ENCODE measurements at regions of chr11 and their contacts with region 1.

Region 1: DNA sequence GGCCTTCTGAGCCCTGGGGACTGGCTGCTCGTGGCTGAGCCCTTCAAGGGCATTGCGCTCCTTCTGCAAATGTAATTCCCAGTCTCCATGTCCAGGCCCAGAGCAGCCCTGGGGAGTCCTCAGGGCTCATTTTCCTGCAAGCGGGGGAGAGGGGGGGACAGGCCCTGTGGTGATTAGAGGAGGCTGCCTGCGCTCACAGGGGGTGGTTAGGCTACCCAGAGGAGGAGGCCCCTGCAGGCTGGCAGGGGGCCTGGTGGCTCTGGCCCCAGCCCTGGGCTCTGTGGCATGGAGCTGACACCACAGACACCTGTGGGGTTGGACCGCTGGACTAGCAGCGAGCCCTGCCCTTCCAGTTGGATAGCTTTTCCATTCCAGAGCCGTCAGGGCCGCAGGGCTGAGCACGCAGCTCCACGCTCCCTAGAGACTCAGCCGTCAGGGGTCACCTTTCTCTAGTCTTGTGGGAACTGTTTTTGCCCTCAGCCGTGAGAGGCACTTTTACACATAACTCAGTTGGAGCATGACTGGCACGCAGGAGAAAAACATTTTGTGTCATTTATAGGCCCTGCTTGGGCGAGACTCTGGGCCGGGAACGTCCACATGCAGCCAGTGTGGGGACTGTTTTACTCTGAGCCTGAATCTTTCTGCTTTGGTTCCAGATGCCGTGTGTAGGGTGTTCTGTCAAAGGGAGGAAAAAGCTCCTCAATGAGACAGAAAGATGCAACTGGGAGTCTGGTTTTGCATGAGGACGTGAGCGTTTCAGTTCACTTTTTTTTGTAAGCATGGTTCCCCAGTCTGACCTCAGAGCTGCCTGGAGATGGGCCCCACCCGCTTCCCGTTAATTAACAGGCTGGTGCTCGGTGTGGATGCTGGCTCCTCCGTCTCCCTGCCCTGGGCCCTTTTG is 58.1 kb downstream of the LRP5 start:
- DNase-seq: peak; percentile 44
- ATAC-seq: peak; percentile 84
- H3K4me3 Mint-ChIP-seq: peak overlapping the region; percentile 81
- H3K27ac Mint-ChIP-seq: peak overlapping the region; percentile 84
- H3K4me1 Mint-ChIP-seq: peaks cover 72% of the 10 kb centered on the region
- H3K27me3 Mint-ChIP-seq: peaks cover 5% of the 10 kb centered on the region
- CTCF ChIP-seq: no peak

Region 2: GRCh38 chr11:68003846-68004550 is 366.5 kb before region 1 on chr11 and contains the start of gene UNC93B1:
- CTCF ChIA-PET with region 1: no interaction called
- POLR2A ChIA-PET with region 1: interaction called, 12 read pairs
- intact Hi-C with region 1: loop called (anchors 2 kb)
- DNase-seq: peak; percentile 80
- ATAC-seq: peak; percentile 66
- H3K4me3 Mint-ChIP-seq: peak within 1 kb of the TSS; percentile 91
- H3K27ac Mint-ChIP-seq: peak within 1 kb of the TSS; percentile 95
- H3K4me1 Mint-ChIP-seq: peaks cover 72% of the 10 kb centered on the region
- H3K27me3 Mint-ChIP-seq: no peaks in the 10 kb centered on the region
- CTCF ChIP-seq: no peak
- total RNA-seq, gene UNC93B1: 117 and 133 TPM in 2 replicates

Region 3: DNA sequence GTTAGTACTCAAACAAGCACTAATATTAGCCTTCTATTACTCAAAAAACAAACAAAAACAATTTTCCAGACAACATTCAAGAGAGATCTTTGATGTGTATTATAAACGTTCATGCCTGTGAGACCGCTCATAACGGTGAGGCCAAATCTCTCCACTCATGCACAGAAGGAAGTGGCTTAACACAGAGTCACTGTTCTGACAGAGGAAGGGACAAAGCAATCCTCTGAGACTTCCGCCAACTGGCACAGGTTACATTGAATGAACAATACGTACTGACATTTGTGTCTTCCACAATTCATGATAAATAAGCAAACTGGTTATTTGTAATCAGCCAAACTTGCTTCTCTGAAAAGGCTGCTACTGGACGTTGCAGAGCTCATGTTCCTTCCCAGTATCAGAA is 279.8 kb before region 1 on chr11:
- CTCF ChIA-PET with region 1: no interaction called
- POLR2A ChIA-PET with region 1: no interaction called
- intact Hi-C with region 1: no loop called
- DNase-seq: no peak
- ATAC-seq: peak; percentile 81
- H3K4me3 Mint-ChIP-seq: peak overlapping the region; percentile 58
- H3K27ac Mint-ChIP-seq: peak overlapping the region; percentile 64
- H3K4me1 Mint-ChIP-seq: peaks cover 12% of the 10 kb centered on the region
- H3K27me3 Mint-ChIP-seq: no peaks in the 10 kb centered on the region
- CTCF ChIP-seq: no peak

Region 4: DNA sequence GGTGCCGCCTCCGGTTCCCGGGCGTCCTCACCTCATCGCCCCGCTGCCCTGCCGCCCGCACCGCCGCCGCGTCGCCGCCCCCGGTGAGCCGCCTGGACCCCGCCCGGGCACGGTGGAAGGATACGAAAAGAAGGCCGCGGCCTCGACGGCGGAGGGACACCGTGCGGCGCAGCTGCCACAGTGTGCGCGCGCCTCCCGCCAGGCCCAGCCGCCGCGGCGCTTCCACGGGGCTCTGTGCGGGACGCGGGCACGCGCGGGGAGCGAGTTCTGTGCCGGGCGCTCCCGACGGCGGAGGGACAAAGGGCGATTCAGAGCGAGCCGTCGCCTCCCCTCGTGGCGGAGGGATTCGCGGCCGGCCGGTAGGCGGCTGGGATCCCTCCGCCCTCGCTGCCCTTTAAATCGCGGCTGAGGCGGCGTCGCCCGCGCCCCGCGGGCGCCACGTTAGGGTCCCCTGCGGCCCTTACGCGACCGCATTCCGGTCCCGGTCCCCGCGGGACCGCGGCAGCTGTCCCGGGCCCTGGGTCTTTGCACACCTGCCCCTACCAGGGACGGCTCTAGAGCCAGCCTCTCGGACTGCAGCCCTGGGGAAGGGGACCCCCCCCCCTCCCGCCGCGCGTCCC is 156.8 kb before region 1 on chr11:
- CTCF ChIA-PET with region 1: no interaction called
- POLR2A ChIA-PET with region 1: interaction called, 4 read pairs
- intact Hi-C with region 1: loop called (anchors 1 kb)
- DNase-seq: peak; percentile 85
- ATAC-seq: peak; percentile 46
- H3K4me3 Mint-ChIP-seq: peak overlapping the region; percentile 83
- H3K27ac Mint-ChIP-seq: peak overlapping the region; percentile 79
- H3K4me1 Mint-ChIP-seq: peaks cover 51% of the 10 kb centered on the region
- H3K27me3 Mint-ChIP-seq: no peaks in the 10 kb centered on the region
- CTCF ChIP-seq: no peak

Region 5: GRCh38 chr11:68297812-68298658 is 72.4 kb before region 1 on chr11:
- CTCF ChIA-PET with region 1: interaction called, 12 read pairs
- POLR2A ChIA-PET with region 1: interaction called, 3 read pairs
- intact Hi-C with region 1: no loop called
- DNase-seq: peak; percentile 81
- ATAC-seq: peak; percentile 94
- H3K4me3 Mint-ChIP-seq: peak overlapping the region; percentile 50
- H3K27ac Mint-ChIP-seq: peak overlapping the region; percentile 53
- H3K4me1 Mint-ChIP-seq: peaks cover 40% of the 10 kb centered on the region
- H3K27me3 Mint-ChIP-seq: no peaks in the 10 kb centered on the region
- CTCF ChIP-seq: peak; percentile 83

Region 6: GRCh38 chr11:68392822-68393221 is 22.4 kb after region 1 on chr11:
- CTCF ChIA-PET with region 1: no interaction called
- POLR2A ChIA-PET with region 1: no interaction called
- intact Hi-C with region 1: no loop called
- DNase-seq: no peak
- ATAC-seq: no peak
- H3K4me3 Mint-ChIP-seq: no peak overlapping the region
- H3K27ac Mint-ChIP-seq: no peak overlapping the region
- H3K4me1 Mint-ChIP-seq: no peaks in the 10 kb centered on the region
- H3K27me3 Mint-ChIP-seq: no peaks in the 10 kb centered on the region
- CTCF ChIP-seq: no peak

Region 7: DNA sequence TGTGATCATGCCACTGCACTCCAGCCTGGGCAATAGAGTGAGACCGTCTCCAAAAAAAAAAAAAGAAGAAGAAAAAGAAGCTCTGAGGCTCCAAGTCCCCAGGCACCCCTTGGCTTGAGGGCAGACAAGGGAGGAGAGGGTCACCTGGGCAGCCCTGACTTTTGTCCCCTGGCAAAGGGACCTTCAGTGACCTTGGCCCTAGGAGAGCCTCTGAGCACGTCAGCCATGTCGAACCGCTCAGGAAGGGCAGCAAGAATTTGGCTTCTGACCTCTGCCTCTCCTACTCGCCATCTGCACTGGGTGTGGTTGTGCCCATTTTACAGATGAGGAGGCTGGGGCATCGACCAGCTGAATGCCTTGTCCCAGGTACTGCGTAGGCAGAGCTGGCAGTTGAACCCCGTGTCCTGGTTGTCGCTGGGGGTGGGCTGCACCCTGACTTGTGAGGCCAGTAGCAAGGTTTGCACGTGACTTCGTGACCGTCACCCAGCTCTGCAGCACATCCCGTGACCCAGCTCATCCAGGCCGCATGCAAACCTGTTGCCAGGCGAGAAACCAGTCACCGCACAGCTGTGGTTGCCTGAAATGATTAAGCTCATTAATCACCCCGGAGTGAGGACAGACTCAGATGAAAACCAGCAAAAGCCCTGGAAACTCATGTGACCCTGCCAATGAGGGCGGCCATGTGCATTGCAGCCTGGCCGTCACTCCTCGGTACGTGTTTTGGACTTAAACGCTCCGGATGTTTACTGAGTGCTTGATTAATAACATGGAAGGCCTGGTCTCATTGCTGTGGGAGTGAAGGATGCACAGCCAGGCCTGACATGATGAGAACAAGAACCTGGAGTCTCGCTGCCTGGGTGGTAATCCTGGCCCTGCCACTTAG is 42.4 kb after region 1 on chr11:
- CTCF ChIA-PET with region 1: no interaction called
- POLR2A ChIA-PET with region 1: interaction called, 3 read pairs
- intact Hi-C with region 1: loop called (anchors 2 kb)
- DNase-seq: peak; percentile 27
- ATAC-seq: peak; percentile 75
- H3K4me3 Mint-ChIP-seq: no peak overlapping the region
- H3K27ac Mint-ChIP-seq: peak overlapping the region; percentile 37
- H3K4me1 Mint-ChIP-seq: peaks cover 15% of the 10 kb centered on the region
- H3K27me3 Mint-ChIP-seq: no peaks in the 10 kb centered on the region
- CTCF ChIP-seq: no peak

Region 8: DNA sequence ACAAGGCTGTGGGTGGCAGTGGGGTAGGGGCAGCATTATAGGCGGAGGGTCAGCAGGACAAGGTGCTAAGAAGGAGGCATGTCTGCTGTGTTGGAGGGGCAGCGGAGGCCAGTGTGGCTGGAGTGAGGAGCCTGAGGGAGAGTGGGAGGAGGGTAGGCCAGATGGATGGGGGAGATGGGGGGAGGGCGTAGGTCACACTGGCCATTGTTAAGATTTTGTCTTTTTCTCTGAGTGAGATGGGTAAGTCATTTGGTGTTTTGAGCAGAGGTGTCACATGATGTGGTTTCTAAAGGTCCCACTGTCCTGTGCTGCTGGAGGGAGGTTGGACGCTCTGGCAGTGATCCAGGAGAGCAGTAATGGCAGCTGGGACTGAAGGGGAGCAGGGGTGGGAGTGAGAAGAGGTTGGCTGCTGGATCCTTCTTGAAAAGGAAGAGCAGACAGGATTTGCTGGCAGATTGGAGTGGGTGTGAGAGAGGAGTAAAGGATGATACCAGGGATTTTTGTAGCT is 99.9 kb after region 1 on chr11:
- CTCF ChIA-PET with region 1: no interaction called
- POLR2A ChIA-PET with region 1: no interaction called
- intact Hi-C with region 1: no loop called
- DNase-seq: no peak
- ATAC-seq: no peak
- H3K4me3 Mint-ChIP-seq: peak overlapping the region; percentile 7
- H3K27ac Mint-ChIP-seq: peak overlapping the region; percentile 64
- H3K4me1 Mint-ChIP-seq: peaks cover 85% of the 10 kb centered on the region
- H3K27me3 Mint-ChIP-seq: no peaks in the 10 kb centered on the region
- CTCF ChIP-seq: no peak

Region 9: GRCh38 chr11:69055598-69056516 is 685.4 kb after region 1 on chr11:
- CTCF ChIA-PET with region 1: no interaction called
- POLR2A ChIA-PET with region 1: no interaction called
- intact Hi-C with region 1: loop called (anchors 1 kb)
- DNase-seq: peak; percentile 78
- ATAC-seq: peak; percentile 87
- H3K4me3 Mint-ChIP-seq: peak overlapping the region; percentile 69
- H3K27ac Mint-ChIP-seq: peak overlapping the region; percentile 86
- H3K4me1 Mint-ChIP-seq: peaks cover 58% of the 10 kb centered on the region
- H3K27me3 Mint-ChIP-seq: no peaks in the 10 kb centered on the region
- CTCF ChIP-seq: no peak